ENCODE measurements at regions of chr2 and their contacts with region 1.

Region 1: GRCh38 chr2:232854082-232854481 is 16.0 kb upstream of the SNORC start:
- DNase-seq: peak; percentile 70
- ATAC-seq: peak in 1 of 2 donors; percentile 43
- H3K4me3 ChIP-seq: no peak overlapping the region
- H3K27ac ChIP-seq: no peak overlapping the region
- H3K4me1 ChIP-seq: peaks cover 9% of the 10 kb centered on the region
- H3K27me3 ChIP-seq: no peaks in the 10 kb centered on the region
- CTCF ChIP-seq: no peak

Region 2: DNA sequence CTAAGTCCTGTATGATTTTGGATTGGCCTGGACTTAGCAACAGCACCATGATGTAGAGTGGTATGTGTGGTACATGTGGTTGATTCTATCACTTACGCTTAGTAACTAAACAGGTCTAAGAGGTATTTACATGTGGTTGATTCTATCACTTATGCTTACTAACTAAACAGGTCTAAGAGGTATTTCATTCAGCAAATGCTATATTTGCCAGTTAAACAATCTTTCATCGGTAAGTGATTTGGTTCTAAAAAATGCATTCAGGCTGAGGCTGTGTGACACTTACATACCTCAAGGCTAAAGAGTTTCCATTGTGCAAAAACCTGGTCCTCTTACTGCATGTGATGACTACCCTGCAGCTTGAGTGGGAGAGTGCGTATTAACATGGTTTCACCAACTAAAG is 290.5 kb before region 1 on chr2:
- intact Hi-C with region 1: no loop called
- DNase-seq: no peak
- ATAC-seq: peak; percentile 64 to 88
- H3K4me3 ChIP-seq: no peak overlapping the region
- H3K27ac ChIP-seq: no peak overlapping the region
- H3K4me1 ChIP-seq: peaks cover 5% of the 10 kb centered on the region
- H3K27me3 ChIP-seq: no peaks in the 10 kb centered on the region
- CTCF ChIP-seq: no peak

Region 3: GRCh38 chr2:233251306-233252116 is 397.4 kb after region 1 on chr2 and contains the start of gene ATG16L1:
- intact Hi-C with region 1: loop called (anchors 10 kb)
- DNase-seq: peak; percentile 98
- ATAC-seq: peak; percentile 100
- H3K4me3 ChIP-seq: peak within 1 kb of the TSS; percentile 87
- H3K27ac ChIP-seq: peak within 1 kb of the TSS; percentile 85
- H3K4me1 ChIP-seq: peaks cover 31% of the 10 kb centered on the region
- H3K27me3 ChIP-seq: no peaks in the 10 kb centered on the region
- CTCF ChIP-seq: peak; percentile 98
- total RNA-seq, gene ATG16L1: 21.4 TPM

Measured in lower lobe of right lung (tissue), 2 donors.